ENCODE measurements at regions of chr2 and their contacts with region 1.

Region 1: DNA sequence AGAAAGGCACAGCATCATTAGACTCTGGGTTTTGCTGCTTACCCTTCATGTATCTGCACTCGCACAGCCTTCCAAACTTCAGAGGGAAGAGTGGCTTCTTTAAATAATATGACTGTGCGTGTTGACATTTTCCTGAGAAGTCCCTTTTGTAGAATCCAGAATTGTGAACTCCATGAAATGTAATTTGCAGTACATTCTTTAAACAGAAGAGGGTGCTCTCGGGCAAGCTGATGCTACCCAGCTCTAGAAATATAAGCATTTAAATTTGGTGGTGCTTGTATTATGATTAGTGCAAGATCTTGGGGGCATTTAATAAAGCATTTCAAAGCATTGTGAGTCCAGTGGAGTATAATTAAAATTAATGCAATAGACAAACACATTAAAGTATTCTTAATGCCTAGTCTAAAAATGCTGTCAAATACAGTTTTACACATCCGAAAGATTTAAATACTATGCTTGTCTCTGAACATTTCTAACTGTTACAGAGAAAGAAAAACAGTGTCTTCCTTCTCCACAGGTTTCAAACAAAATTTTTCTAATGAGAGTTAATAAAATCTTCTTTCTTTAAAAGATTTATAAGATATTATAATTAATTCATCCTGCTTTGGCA is 17.3 kb upstream of the GTF2A1L start:
- DNase-seq: no peak
- H3K4me3 ChIP-seq: no peak overlapping the region
- H3K27ac ChIP-seq: no peak overlapping the region
- H3K4me1 ChIP-seq: no peaks in the 10 kb centered on the region
- H3K27me3 ChIP-seq: no peaks in the 10 kb centered on the region
- CTCF ChIP-seq: peak; percentile 47 to 75 (median 58)
- POLR2A ChIP-seq: no peak

Region 2: GRCh38 chr2:48341551-48342133 is 258.7 kb before region 1 on chr2:
- intact Hi-C with region 1: no loop called
- DNase-seq: no peak
- H3K4me3 ChIP-seq: no peak overlapping the region
- H3K27ac ChIP-seq: no peak overlapping the region
- H3K4me1 ChIP-seq: peaks cover 0 to 10% of the 10 kb centered on the region in 2 donors
- H3K27me3 ChIP-seq: no peaks in the 10 kb centered on the region
- CTCF ChIP-seq: no peak
- POLR2A ChIP-seq: no peak

Region 3: DNA sequence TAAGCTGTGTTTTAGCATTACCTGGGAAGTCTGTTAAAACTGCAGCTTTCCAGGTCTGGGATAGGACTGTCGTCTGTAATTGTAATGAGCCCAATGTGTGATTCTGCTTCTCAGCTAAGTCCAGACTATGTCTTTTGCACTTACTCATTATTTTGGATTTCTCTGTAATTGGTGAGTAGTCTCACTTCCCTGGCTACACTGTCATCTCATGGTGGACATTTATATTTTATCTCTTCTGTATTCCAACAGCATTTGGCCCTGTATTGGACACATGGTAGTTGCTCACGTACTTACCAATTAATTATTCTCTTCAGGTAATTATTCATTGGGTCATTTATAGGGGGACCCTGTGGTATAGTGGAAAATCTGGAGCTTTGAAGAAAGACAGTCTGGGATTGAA is 127.3 kb after region 1 on chr2:
- intact Hi-C with region 1: loop called (anchors 10 kb)
- DNase-seq: no peak
- H3K4me3 ChIP-seq: no peak overlapping the region
- H3K27ac ChIP-seq: peak overlapping the region; percentile 26 to 74 (median 69)
- H3K4me1 ChIP-seq: peaks cover 24 to 45% of the 10 kb centered on the region in 2 donors
- H3K27me3 ChIP-seq: no peaks in the 10 kb centered on the region
- CTCF ChIP-seq: peak in 1 of 6 experiments; percentile 21
- POLR2A ChIP-seq: no peak

Region 4: DNA sequence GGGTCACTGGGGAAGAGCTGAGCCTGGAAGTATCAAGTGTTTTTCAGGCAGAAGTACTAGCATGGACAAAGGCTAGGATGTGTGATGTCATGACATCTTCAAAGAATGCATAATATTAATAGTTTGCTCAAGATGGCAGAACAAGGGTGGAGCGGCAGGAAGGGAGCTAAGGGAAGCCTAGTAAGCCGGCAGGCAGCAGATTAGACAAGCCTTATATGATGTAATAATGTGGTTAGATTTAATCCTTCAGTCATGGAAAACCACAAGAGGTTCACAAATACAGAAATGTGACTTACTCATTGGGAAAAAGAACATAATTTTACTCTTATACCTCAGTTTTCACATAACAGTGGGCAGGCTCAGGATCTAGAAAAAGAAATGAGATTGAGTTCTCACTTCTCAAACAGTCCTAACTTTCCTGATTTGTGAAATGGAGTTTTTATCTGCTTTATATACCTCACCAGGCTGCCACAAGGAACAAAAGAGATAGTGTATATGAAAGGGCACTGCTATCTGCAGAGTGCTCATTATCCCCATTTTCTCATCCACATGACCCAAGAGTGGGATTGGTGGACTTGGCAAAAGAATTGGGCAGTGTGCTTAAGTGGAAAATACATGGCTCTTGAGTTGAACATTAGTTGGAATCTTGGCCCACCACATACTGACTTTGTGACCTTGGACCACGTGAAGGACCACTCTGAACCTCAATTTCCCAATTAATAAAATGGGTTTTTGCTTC is 244.3 kb after region 1 on chr2:
- intact Hi-C with region 1: no loop called
- DNase-seq: no peak
- H3K4me3 ChIP-seq: no peak overlapping the region
- H3K27ac ChIP-seq: no peak overlapping the region
- H3K4me1 ChIP-seq: no peaks in the 10 kb centered on the region
- H3K27me3 ChIP-seq: no peaks in the 10 kb centered on the region
- CTCF ChIP-seq: no peak
- POLR2A ChIP-seq: no peak

Measured in thyroid gland (tissue), 4 donors.